Activated CD4-positive, alpha-beta memory T cell treated with anti-CD3 and anti-CD28 coated beads, Interleukin-2, amount 10 ng/mL, durations not matched to agents 7 days and 5 days (primary cell): ENCODE measurements at regions of chr15 and their contacts with region 1.

Region 1: DNA sequence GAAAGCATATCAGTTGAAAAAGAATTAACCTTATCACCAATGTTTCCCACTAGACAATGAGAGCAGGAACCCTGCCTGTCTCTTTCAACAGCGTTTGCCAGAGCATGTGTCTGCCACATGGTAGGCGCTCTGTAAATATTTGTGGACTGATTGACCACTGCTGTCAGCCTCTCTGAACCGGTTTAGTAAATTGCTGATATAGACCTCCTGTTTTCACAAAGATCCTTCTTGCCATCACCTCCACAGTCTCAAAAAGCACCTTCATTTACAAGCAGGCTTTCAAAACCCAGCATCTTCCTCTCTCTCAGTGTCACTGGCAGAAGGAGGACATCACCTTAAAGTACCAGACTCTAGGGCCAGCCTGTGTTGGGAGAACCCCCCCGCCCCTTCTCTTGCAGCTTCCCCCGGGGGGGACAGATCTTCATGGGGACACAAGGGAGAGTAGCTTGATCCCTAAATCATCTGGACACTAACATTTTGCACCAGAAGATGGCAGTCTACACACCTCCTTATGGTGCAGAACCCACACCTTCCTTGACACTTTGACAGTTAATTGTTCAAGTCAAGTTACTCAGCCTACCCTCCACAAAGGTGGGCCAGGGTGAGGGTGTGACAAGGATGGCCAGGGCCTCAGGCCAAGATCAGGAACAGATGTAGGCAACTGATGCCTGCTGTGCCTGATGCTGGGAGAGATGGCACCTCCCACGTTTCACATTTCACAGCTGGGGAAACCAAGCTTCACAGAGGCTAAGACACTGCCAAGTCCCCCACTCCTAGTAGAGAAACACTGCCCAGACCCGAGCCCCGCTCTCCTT is 37.8 kb upstream of the USP3 start:
- DNase-seq: peak; percentile 58
- H3K4me3 Mint-ChIP-seq: no peak overlapping the region
- H3K27ac Mint-ChIP-seq: peak overlapping the region; percentile 27
- H3K4me1 Mint-ChIP-seq: peaks cover 11% of the 10 kb centered on the region
- H3K27me3 Mint-ChIP-seq: peaks cover 6% of the 10 kb centered on the region

Region 2: GRCh38 chr15:63481105-63481810 is 14.7 kb after region 1 on chr15:
- CTCF ChIA-PET with region 1: interaction called, 15 read pairs
- POLR2A ChIA-PET with region 1: interaction called, 7 read pairs
- DNase-seq: no peak
- H3K4me3 Mint-ChIP-seq: no peak overlapping the region
- H3K27ac Mint-ChIP-seq: no peak overlapping the region
- H3K4me1 Mint-ChIP-seq: peaks cover 67% of the 10 kb centered on the region
- H3K27me3 Mint-ChIP-seq: no peaks in the 10 kb centered on the region

Region 3: GRCh38 chr15:63497642-63498467 is 31.3 kb after region 1 on chr15:
- CTCF ChIA-PET with region 1: interaction called, 20 read pairs
- POLR2A ChIA-PET with region 1: interaction called, 4 read pairs
- DNase-seq: peak; percentile 71
- H3K4me3 Mint-ChIP-seq: no peak overlapping the region
- H3K27ac Mint-ChIP-seq: no peak overlapping the region
- H3K4me1 Mint-ChIP-seq: peaks cover 74% of the 10 kb centered on the region
- H3K27me3 Mint-ChIP-seq: no peaks in the 10 kb centered on the region

Region 4: DNA sequence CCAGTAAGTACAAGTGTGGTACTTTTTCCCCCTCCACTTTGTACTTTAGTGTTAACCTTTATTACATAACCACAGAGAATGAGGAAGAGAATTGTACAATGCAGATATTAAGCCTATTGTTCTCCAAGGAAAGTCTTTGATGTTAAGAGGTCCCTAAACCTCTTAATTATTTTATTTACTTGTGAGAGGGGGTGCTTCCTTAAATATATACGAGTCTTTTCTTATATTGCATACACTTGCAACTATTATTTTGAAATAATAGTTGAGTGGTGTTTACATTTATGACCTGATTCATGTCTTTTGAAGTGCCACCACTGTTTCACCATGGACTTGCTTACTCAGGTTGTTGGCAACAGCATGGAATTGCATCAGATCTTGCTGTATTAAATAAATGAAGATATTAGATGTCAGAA is 48.0 kb after region 1 on chr15:
- CTCF ChIA-PET with region 1: interaction called, 16 read pairs
- POLR2A ChIA-PET with region 1: interaction called, 4 read pairs
- DNase-seq: no peak
- H3K4me3 Mint-ChIP-seq: no peak overlapping the region
- H3K27ac Mint-ChIP-seq: no peak overlapping the region
- H3K4me1 Mint-ChIP-seq: peaks cover 66% of the 10 kb centered on the region
- H3K27me3 Mint-ChIP-seq: no peaks in the 10 kb centered on the region

Region 5: GRCh38 chr15:63553388-63553791 is 86.8 kb after region 1 on chr15:
- CTCF ChIA-PET with region 1: interaction called, 12 read pairs
- POLR2A ChIA-PET with region 1: no interaction called
- DNase-seq: no peak
- H3K4me3 Mint-ChIP-seq: no peak overlapping the region
- H3K27ac Mint-ChIP-seq: no peak overlapping the region
- H3K4me1 Mint-ChIP-seq: peaks cover 19% of the 10 kb centered on the region
- H3K27me3 Mint-ChIP-seq: no peaks in the 10 kb centered on the region

Region 6: GRCh38 chr15:63610200-63610841 is 143.7 kb after region 1 on chr15:
- CTCF ChIA-PET with region 1: interaction called, 16 read pairs
- POLR2A ChIA-PET with region 1: interaction called, 6 read pairs
- DNase-seq: peak; percentile 86
- H3K4me3 Mint-ChIP-seq: no peak overlapping the region
- H3K27ac Mint-ChIP-seq: peak overlapping the region; percentile 86
- H3K4me1 Mint-ChIP-seq: peaks cover 49% of the 10 kb centered on the region
- H3K27me3 Mint-ChIP-seq: no peaks in the 10 kb centered on the region

Region 7: GRCh38 chr15:63677730-63678129 is 211.1 kb after region 1 on chr15:
- CTCF ChIA-PET with region 1: no interaction called
- POLR2A ChIA-PET with region 1: no interaction called
- DNase-seq: no peak
- H3K4me3 Mint-ChIP-seq: no peak overlapping the region
- H3K27ac Mint-ChIP-seq: no peak overlapping the region
- H3K4me1 Mint-ChIP-seq: peaks cover 11% of the 10 kb centered on the region
- H3K27me3 Mint-ChIP-seq: no peaks in the 10 kb centered on the region